ENCODE measurements at regions of chr9 and their contacts with region 1.

Region 1: GRCh38 chr9:133992780-133993634 is 883 bp upstream of the VAV2 start:
- DNase-seq: peak; percentile 93
- H3K27ac ChIP-seq: peak overlapping the region; percentile 99
- CTCF ChIP-seq: peak; percentile 71

Region 2: GRCh38 chr9:133768859-133769425 is 224.1 kb before region 1 on chr9:
- CTCF ChIA-PET with region 1: interaction called, 12 read pairs
- POLR2A ChIA-PET with region 1: no interaction called
- DNase-seq: no peak
- H3K27ac ChIP-seq: peak overlapping the region; percentile 2; the same call in 1 of the 2 replicates
- CTCF ChIP-seq: no peak

Region 3: GRCh38 chr9:133792721-133793470 is 200.1 kb before region 1 on chr9:
- CTCF ChIA-PET with region 1: interaction called, 36 read pairs
- POLR2A ChIA-PET with region 1: no interaction called
- DNase-seq: peak; percentile 71
- H3K27ac ChIP-seq: peak overlapping the region; percentile 63
- CTCF ChIP-seq: peak; percentile 96

Region 4: DNA sequence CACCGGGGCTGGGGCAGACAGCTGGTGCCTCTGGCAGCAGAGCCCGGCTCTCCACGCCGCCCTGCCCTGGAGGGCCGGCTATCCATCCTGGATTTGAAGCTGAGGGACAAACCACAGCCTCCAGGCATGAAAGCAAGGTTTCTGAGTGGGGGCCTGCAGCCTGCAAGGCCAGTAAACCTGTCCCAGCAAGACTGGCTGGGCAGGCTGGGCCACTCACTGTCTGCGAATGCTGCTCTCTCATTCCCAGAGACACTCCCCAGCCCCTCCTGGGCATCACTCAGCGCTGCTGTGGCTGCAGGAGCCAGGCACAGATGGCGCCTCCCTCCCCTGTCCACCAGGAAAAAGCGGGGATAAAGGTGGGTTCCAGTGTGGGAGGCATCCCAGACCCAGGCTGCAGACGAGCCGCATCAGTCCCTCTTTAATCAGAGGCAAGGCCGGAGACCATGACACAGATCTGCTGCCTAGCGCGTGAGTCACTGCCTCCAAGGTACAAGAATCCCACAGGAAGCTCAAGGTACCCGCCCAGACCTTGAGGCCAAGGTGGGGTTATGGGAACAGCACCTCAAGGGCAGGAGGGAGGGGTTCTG is 118.9 kb before region 1 on chr9:
- CTCF ChIA-PET with region 1: interaction called, 20 read pairs
- POLR2A ChIA-PET with region 1: interaction called, 6 read pairs
- DNase-seq: peak; percentile 98
- H3K27ac ChIP-seq: peak overlapping the region; percentile 100
- CTCF ChIP-seq: no peak

Region 5: GRCh38 chr9:133950629-133951111 is 42.3 kb before region 1 on chr9:
- CTCF ChIA-PET with region 1: interaction called, 11 read pairs
- POLR2A ChIA-PET with region 1: interaction called, 4 read pairs
- DNase-seq: no peak
- H3K27ac ChIP-seq: peak overlapping the region; percentile 95
- CTCF ChIP-seq: no peak

Region 6: DNA sequence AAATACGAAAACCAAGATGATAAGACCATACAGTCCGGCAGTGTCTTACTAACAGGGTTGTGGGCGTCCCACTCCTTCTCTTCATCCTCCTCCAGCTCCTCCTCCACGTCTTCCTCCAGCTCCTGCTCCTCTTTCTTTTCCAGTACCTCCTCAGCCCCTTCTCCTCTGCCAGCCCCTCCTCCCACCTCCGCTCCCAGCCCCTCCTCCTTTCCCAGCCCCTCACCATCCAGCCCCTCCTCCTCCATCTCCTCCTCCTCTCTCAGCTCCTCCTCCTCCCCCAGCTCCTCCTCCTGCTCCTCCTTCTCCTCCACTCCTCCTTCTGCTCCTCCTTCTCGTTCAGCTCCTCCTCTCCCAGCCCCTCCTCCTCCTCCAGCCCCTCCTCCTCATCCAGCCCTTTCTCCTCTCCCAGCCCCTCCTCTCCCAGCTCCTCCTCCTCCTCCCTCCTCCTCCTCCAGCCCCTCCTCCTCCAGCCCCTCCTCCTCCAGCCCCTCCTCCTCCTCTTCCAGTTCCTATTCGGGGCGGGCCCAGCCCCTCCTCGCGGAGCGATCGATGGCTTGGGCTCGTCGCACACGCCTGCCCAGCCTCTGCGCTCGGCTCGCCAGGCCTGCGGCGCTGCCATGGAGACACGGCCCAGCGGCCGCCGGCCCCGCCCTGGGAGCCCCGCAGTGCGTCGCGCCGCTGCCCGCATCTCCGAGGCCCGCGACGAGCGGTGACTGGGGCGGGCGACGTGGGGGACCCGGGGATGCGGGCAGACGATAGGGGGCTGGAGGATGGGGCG is 32.0 kb after region 1 on chr9 and contains the start of gene BRD3OS:
- CTCF ChIA-PET with region 1: interaction called, 11 read pairs
- POLR2A ChIA-PET with region 1: no interaction called
- DNase-seq: peak; percentile 99
- H3K27ac ChIP-seq: peak within 1 kb of the TSS; percentile 88
- CTCF ChIP-seq: no peak

Region 7: GRCh38 chr9:134039386-134040175 is 46.6 kb after region 1 on chr9:
- CTCF ChIA-PET with region 1: no interaction called
- POLR2A ChIA-PET with region 1: no interaction called
- DNase-seq: no peak
- H3K27ac ChIP-seq: peak overlapping the region; percentile 13
- CTCF ChIP-seq: no peak

Measured in RWPE1 (cell line).